Ascending aorta (tissue), 2 donors: ENCODE measurements at regions of chr10 and their contacts with region 1.

Region 1: GRCh38 chr10:73848821-73849489 is 25.4 kb downstream of the CAMK2G start:
- DNase-seq: peak; percentile 58 to 94
- H3K4me3 ChIP-seq: no peak overlapping the region
- H3K27ac ChIP-seq: peak overlapping the region; percentile 94
- H3K4me1 ChIP-seq: peaks cover 18 to 35% of the 10 kb centered on the region in 2 donors
- H3K27me3 ChIP-seq: no peaks in the 10 kb centered on the region
- CTCF ChIP-seq: peak; percentile 98 to 100 (median 100)

Region 2: GRCh38 chr10:73859428-73859783 is 10.5 kb after region 1 on chr10:
- intact Hi-C with region 1: no loop called
- DNase-seq: no peak
- H3K4me3 ChIP-seq: peak overlapping the region in 1 of 2 donors; percentile 5
- H3K27ac ChIP-seq: peak overlapping the region; percentile 94
- H3K4me1 ChIP-seq: peaks cover 24 to 68% of the 10 kb centered on the region in 2 donors
- H3K27me3 ChIP-seq: no peaks in the 10 kb centered on the region
- CTCF ChIP-seq: no peak

Region 3: GRCh38 chr10:73874267-73875138 is 25.5 kb after region 1 on chr10 and contains the start of gene CAMK2G:
- intact Hi-C with region 1: loop called (anchors 1 kb)
- DNase-seq: peak; percentile 41 to 91
- H3K4me3 ChIP-seq: peak within 1 kb of the TSS; percentile 75 to 96
- H3K27ac ChIP-seq: peak within 1 kb of the TSS; percentile 67 to 87
- H3K4me1 ChIP-seq: peaks cover 16 to 48% of the 10 kb centered on the region in 2 donors
- H3K27me3 ChIP-seq: no peaks in the 10 kb centered on the region
- CTCF ChIP-seq: no peak
- total RNA-seq, gene CAMK2G: 60.3 TPM

Region 4: GRCh38 chr10:73879296-73880173 is 30.6 kb after region 1 on chr10:
- intact Hi-C with region 1: loop called (anchors 1 kb)
- DNase-seq: peak; percentile 71 to 95
- H3K4me3 ChIP-seq: no peak overlapping the region
- H3K27ac ChIP-seq: peak overlapping the region; percentile 35 to 68
- H3K4me1 ChIP-seq: peaks cover 0 to 18% of the 10 kb centered on the region in 2 donors
- H3K27me3 ChIP-seq: no peaks in the 10 kb centered on the region
- CTCF ChIP-seq: peak; percentile 91 to 99 (median 97)

Region 5: GRCh38 chr10:73892310-73893030 is 43.5 kb after region 1 on chr10:
- intact Hi-C with region 1: no loop called
- DNase-seq: no peak
- H3K4me3 ChIP-seq: no peak overlapping the region
- H3K27ac ChIP-seq: no peak overlapping the region
- H3K4me1 ChIP-seq: peaks cover 8 to 20% of the 10 kb centered on the region in 2 donors
- H3K27me3 ChIP-seq: no peaks in the 10 kb centered on the region
- CTCF ChIP-seq: no peak

Region 6: GRCh38 chr10:73940634-73941221 is 91.8 kb after region 1 on chr10:
- intact Hi-C with region 1: loop called (anchors 2 kb)
- DNase-seq: peak; percentile 38 to 94
- H3K4me3 ChIP-seq: no peak overlapping the region
- H3K27ac ChIP-seq: peak overlapping the region; percentile 62 to 69
- H3K4me1 ChIP-seq: peaks cover 0 to 6% of the 10 kb centered on the region in 2 donors
- H3K27me3 ChIP-seq: no peaks in the 10 kb centered on the region
- CTCF ChIP-seq: peak; percentile 96